ENCODE measurements at regions of chr11 and their contacts with region 1.

Region 1: DNA sequence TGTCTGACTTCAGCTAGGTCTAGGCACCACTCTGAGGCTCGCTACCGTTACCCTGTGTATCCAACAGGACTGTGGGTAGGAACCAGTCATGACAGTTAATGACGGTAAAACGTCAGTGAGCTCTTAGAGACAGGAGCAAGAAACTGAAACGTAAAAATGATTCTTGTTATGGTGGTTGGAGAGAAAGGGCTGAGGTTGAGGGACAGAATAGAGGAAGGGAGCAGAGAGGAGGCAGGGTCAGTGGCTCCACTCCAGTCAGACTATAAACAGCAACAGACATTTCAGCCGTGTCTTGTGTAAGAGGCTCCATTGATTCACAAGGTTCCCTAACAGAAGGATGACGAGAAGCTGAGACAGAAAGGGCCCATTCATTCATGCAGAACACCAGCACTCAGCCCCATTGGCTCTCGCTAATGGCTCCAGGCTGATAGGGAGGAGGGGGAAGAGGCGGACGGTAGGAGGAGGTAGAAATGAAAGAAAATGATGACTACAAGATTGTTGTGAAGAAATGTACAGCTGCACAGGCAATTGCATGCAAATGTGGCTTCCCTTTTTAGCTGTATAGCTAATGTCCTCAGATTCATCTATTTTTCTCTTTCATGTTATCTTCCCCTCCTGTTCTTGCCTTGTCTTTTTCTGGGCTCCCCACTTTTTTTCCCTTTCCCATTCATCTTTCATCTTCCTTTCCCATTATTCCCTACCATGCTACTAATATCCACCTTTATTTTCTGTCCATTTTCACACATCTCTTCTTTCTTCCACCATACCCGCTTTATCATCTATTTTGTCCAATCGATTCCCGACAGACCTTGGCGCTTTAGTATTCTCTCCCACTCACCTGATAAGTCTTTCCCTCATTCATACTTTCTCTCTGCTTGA is 34.3 kb downstream of the ETS1 start:
- DNase-seq: peak; percentile 93
- ATAC-seq: peak; percentile 80
- H3K4me3 ChIP-seq: peak overlapping the region; percentile 4 to 58 (median 27)
- H3K4me3 Mint-ChIP-seq: peak overlapping the region; percentile 85
- H3K27ac ChIP-seq: peak overlapping the region; percentile 92 to 93
- H3K27ac Mint-ChIP-seq: peak overlapping the region; percentile 99
- H3K4me1 ChIP-seq: peaks cover 62 to 71% of the 10 kb centered on the region in 2 donors
- H3K4me1 Mint-ChIP-seq: peaks cover 70% of the 10 kb centered on the region
- H3K27me3 ChIP-seq: no peaks in the 10 kb centered on the region
- H3K27me3 Mint-ChIP-seq: no peaks in the 10 kb centered on the region
- CTCF ChIP-seq: peak; percentile 10

Region 2: GRCh38 chr11:128098781-128099180 is 454.2 kb before region 1 on chr11:
- CTCF ChIA-PET with region 1: no interaction called
- POLR2A ChIA-PET with region 1: no interaction called
- intact Hi-C with region 1: no loop called
- DNase-seq: no peak
- ATAC-seq: no peak
- H3K4me3 ChIP-seq: no peak overlapping the region
- H3K4me3 Mint-ChIP-seq: no peak overlapping the region
- H3K27ac ChIP-seq: no peak overlapping the region
- H3K27ac Mint-ChIP-seq: no peak overlapping the region
- H3K4me1 ChIP-seq: no peaks in the 10 kb centered on the region
- H3K4me1 Mint-ChIP-seq: no peaks in the 10 kb centered on the region
- H3K27me3 ChIP-seq: peaks cover 0 to 5% (median 2%) of the 10 kb centered on the region in 4 experiments
- H3K27me3 Mint-ChIP-seq: peaks cover 23% of the 10 kb centered on the region
- CTCF ChIP-seq: no peak

Region 3: DNA sequence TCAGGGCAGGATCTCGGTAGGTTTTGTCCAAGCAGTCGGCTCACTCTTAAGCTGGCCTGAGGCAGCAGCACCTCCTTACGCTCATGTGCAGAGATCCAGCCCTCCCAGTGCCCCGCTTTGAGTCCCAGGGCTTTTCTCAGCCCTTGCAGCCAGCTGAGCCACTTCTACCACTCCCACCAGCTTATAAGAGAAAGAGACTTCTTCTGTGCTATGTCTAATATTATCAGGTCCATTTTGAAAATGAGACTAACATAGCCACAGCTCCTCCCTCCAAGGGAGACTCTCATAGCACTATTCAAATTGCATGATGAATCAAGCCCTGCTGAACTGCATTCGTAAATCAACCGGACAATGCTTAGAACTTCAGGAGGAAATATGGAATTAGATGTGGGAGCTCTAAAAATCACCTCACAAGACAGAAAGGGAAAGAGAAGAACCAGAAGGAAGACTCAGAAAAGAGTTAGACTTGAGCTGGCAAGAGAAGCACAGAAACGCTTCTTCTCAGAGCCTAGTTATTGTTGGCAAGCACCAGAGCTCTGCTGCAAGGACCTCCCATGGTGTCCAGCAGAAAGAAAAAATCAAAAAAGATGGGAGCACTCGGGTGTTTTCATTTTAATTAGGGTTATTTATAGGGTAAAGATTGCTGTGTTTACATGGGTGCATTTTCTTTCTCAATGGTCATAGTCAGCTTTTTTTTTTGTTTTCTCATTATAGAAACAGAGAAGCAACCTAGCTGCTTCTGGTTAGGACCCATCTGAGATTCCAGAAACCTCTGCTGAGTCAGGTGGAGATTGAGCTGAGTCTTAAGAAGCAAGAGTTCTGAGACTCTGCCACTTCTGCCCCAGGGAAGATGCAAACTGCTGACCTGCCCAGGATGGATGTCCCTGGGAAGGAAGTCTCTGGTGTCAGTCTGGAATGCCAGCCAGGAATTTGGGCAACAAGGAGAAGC is 147.0 kb before region 1 on chr11:
- CTCF ChIA-PET with region 1: no interaction called
- POLR2A ChIA-PET with region 1: no interaction called
- intact Hi-C with region 1: no loop called
- DNase-seq: no peak
- ATAC-seq: no peak
- H3K4me3 ChIP-seq: no peak overlapping the region
- H3K4me3 Mint-ChIP-seq: no peak overlapping the region
- H3K27ac ChIP-seq: no peak overlapping the region
- H3K27ac Mint-ChIP-seq: no peak overlapping the region
- H3K4me1 ChIP-seq: no peaks in the 10 kb centered on the region
- H3K4me1 Mint-ChIP-seq: peaks cover 5% of the 10 kb centered on the region
- H3K27me3 ChIP-seq: no peaks in the 10 kb centered on the region
- H3K27me3 Mint-ChIP-seq: no peaks in the 10 kb centered on the region
- CTCF ChIP-seq: no peak

Region 4: DNA sequence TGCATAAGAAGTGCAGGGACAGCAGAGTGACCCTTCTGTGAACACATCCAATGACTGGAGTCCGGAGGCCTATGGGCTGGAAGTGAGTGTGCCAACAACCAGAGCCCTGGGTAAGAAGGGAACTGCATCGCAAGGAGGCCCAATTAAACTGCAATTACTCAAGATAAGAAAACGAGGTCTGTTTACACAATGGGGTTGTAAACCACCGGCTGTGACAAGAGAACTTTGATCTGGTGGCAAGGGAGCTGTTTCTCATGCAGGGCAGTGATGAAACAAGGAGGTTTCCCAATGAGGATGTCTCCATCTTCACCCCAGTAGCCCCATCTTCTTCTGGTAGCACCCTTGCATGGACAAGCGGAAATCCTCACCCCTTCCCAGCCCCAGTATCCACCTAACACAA is 12.9 kb after region 1 on chr11:
- CTCF ChIA-PET with region 1: interaction called, 10 read pairs
- POLR2A ChIA-PET with region 1: interaction called, 15 read pairs
- intact Hi-C with region 1: loop called (anchors 1 kb)
- DNase-seq: no peak
- ATAC-seq: no peak
- H3K4me3 ChIP-seq: no peak overlapping the region
- H3K4me3 Mint-ChIP-seq: no peak overlapping the region
- H3K27ac ChIP-seq: peak overlapping the region in 1 of 2 donors; percentile 33
- H3K27ac Mint-ChIP-seq: peak overlapping the region; percentile 65
- H3K4me1 ChIP-seq: peaks cover 50 to 57% of the 10 kb centered on the region in 2 donors
- H3K4me1 Mint-ChIP-seq: peaks cover 67% of the 10 kb centered on the region
- H3K27me3 ChIP-seq: no peaks in the 10 kb centered on the region
- H3K27me3 Mint-ChIP-seq: no peaks in the 10 kb centered on the region
- CTCF ChIP-seq: no peak

Region 5: GRCh38 chr11:128603752-128604414 is 50.9 kb after region 1 on chr11:
- CTCF ChIA-PET with region 1: interaction called, 37 read pairs
- POLR2A ChIA-PET with region 1: interaction called, 4 read pairs
- intact Hi-C with region 1: no loop called
- DNase-seq: peak; percentile 63
- ATAC-seq: peak; percentile 69
- H3K4me3 ChIP-seq: no peak overlapping the region
- H3K4me3 Mint-ChIP-seq: peak overlapping the region; percentile 35
- H3K27ac ChIP-seq: peak overlapping the region in 1 of 2 donors; percentile 10
- H3K27ac Mint-ChIP-seq: peak overlapping the region; percentile 72
- H3K4me1 ChIP-seq: peaks cover 55 to 59% of the 10 kb centered on the region in 2 donors
- H3K4me1 Mint-ChIP-seq: peaks cover 72% of the 10 kb centered on the region
- H3K27me3 ChIP-seq: no peaks in the 10 kb centered on the region
- H3K27me3 Mint-ChIP-seq: no peaks in the 10 kb centered on the region
- CTCF ChIP-seq: no peak

Region 6: DNA sequence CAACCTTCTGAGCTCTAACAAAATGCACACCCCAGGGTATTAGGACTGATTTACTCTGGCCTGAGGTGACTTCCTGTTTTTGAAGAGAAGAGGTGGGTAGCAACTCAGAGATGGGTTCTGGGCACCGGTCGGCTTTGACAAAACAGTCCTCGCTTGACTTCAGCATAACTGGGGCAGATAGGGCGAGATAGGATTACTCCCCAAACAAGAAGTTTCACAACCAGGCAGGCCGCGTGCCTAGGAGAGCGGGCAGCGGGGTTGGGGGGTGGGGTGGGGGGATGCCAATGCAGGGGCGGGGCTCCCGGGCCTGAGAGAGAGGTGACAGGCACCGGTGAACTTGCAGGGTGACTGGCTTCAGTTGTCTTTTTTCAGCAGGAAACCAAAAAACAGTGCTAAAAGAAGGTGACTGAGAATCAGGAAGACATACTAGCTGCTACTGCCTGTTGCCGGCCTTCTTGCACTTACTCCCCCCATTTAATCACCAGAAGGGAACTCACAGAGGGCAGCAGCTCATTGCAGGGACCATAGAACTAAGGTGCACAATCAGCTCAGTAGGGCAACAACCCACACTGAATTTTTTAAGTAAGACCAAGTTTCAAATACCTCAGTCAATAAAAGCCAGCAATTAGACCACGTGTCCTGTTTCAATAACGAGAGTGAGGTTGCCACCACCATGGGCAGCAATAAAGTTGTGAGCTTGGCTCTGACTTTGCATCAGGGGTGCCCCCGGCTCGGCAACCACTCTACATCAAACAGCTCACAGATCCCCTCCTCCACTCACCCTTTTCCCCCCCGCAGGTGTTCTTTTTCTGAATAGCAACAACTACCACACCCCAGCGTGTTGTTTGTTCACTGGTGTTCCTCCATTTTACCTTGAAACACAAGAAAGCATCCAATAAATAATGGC is 71.5 kb after region 1 on chr11:
- CTCF ChIA-PET with region 1: interaction called, 81 read pairs
- POLR2A ChIA-PET with region 1: interaction called, 40 read pairs
- intact Hi-C with region 1: loop called (anchors 1 kb)
- DNase-seq: peak; percentile 92
- ATAC-seq: peak; percentile 85
- H3K4me3 ChIP-seq: peak overlapping the region in 2 of 5 experiments; percentile 3 to 43
- H3K4me3 Mint-ChIP-seq: peak overlapping the region; percentile 77
- H3K27ac ChIP-seq: peak overlapping the region; percentile 90 to 93
- H3K27ac Mint-ChIP-seq: peak overlapping the region; percentile 99
- H3K4me1 ChIP-seq: peaks cover 98% of the 10 kb centered on the region in 2 donors
- H3K4me1 Mint-ChIP-seq: peaks cover 96% of the 10 kb centered on the region
- H3K27me3 ChIP-seq: no peaks in the 10 kb centered on the region
- H3K27me3 Mint-ChIP-seq: no peaks in the 10 kb centered on the region
- CTCF ChIP-seq: no peak